Caco-2 (cell line): ENCODE measurements at regions of chr9 and their contacts with region 1.

Region 1: DNA sequence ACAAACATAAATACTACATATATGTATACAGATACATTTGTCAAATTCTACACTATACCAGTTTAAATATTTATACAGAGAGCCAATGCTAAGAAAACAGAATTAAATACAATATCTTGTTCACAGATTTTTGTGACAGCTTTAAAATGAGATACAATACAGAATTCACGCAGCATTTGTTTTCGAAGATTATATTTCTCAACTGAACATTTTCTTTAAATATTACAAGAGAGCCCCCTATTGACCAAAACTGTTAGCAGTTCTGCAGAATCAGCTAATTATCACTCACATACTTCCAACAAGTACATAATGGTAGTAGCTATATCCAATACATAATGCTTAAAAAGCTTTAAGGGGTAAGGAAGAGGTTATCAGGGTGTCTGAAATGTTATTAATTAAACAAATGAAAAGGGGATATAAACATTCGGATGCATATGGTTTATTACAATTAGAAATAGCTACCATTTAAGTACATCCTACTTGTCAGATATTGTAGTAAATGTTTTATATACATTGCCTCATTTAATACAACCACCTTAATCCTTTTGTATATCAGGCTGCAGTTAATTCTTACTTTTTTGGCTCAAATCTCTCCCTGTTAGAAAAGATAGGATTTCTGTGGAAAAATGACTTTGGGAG is 31.7 kb downstream of the ZDHHC21 start:
- DNase-seq: peak in 1 of 2 experiments; percentile 7
- H3K4me3 ChIP-seq: no peak overlapping the region
- H3K4me3 Mint-ChIP-seq: no peak overlapping the region
- H3K27ac Mint-ChIP-seq: no peak overlapping the region
- H3K4me1 ChIP-seq: no peaks in the 10 kb centered on the region
- H3K4me1 Mint-ChIP-seq: no peaks in the 10 kb centered on the region
- H3K27me3 ChIP-seq: no peaks in the 10 kb centered on the region
- H3K27me3 Mint-ChIP-seq: no peaks in the 10 kb centered on the region
- CTCF ChIP-seq: peak; percentile 26 to 30

Region 2: GRCh38 chr9:14441976-14442651 is 219.4 kb before region 1 on chr9:
- CTCF ChIA-PET with region 1: no interaction called
- POLR2A ChIA-PET with region 1: no interaction called
- intact Hi-C with region 1: loop called (anchors 5 kb)
- DNase-seq: peak; percentile 44 to 49
- H3K4me3 ChIP-seq: no peak overlapping the region
- H3K4me3 Mint-ChIP-seq: no peak overlapping the region
- H3K27ac Mint-ChIP-seq: no peak overlapping the region
- H3K4me1 ChIP-seq: no peaks in the 10 kb centered on the region
- H3K4me1 Mint-ChIP-seq: no peaks in the 10 kb centered on the region
- H3K27me3 ChIP-seq: no peaks in the 10 kb centered on the region
- H3K27me3 Mint-ChIP-seq: peaks cover 12% of the 10 kb centered on the region
- CTCF ChIP-seq: peak; percentile 36 to 39

Region 3: DNA sequence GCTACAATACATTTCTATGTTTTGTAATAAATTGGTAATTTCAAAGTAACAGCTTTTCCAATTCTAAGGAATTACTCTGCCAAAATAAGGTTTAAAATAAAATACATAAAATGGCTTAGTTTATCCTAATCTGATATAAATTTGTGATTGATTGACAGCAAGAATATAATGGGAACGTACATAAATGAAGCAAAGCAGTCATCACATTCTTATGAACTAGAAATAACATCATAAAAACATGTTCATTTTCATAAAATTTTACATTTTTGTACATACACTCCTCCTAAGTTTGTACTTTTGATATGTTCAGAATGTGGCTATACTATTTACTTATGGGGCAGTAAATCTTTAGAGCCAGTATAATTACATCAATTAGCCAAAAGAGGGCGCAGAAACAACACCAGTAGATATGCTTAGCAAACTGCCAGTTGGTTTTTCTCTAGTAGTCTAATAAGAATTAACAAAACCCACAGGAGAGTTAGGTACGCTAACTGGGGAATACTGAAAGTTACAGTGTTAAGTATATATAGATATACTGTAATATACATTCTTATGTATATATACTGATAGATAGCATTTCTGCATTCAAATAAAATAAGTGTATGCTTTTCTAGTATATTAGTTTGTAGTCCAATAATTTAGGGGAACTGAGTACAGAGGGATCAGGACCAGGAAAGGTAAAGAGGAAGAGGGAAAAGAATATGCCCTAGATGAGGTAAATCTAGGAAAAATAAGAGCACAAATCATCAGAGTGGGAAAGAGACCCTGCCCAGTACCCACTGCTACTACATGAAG is 45.2 kb before region 1 on chr9:
- CTCF ChIA-PET with region 1: no interaction called
- POLR2A ChIA-PET with region 1: no interaction called
- intact Hi-C with region 1: loop called (anchors 2 kb)
- DNase-seq: peak in 1 of 2 experiments; percentile 16
- H3K4me3 ChIP-seq: no peak overlapping the region
- H3K4me3 Mint-ChIP-seq: no peak overlapping the region
- H3K27ac Mint-ChIP-seq: no peak overlapping the region
- H3K4me1 ChIP-seq: no peaks in the 10 kb centered on the region
- H3K4me1 Mint-ChIP-seq: no peaks in the 10 kb centered on the region
- H3K27me3 ChIP-seq: no peaks in the 10 kb centered on the region
- H3K27me3 Mint-ChIP-seq: no peaks in the 10 kb centered on the region
- CTCF ChIP-seq: peak; percentile 42 to 45

Region 4: DNA sequence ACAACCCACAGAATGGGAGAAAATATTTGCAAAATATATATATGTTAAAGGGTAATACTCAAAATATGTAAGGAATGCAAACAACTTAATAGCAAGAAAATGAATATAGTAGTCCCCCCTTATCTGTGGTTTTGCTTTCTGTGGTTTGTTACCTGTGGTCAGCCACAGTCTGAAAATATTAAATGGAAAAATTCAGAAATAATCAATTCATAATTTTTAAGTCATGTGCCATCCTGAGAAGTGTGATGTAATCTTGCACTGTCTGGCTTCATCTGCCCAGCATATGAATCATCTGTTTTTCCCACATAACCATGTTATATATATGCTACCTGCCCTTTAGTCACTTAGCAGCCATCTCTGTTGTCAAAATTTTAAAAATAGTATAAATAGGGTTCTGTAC is 49.3 kb after region 1 on chr9:
- CTCF ChIA-PET with region 1: no interaction called
- POLR2A ChIA-PET with region 1: no interaction called
- intact Hi-C with region 1: no loop called
- DNase-seq: no peak
- H3K4me3 ChIP-seq: no peak overlapping the region
- H3K4me3 Mint-ChIP-seq: no peak overlapping the region
- H3K27ac Mint-ChIP-seq: no peak overlapping the region
- H3K4me1 ChIP-seq: no peaks in the 10 kb centered on the region
- H3K4me1 Mint-ChIP-seq: no peaks in the 10 kb centered on the region
- H3K27me3 ChIP-seq: no peaks in the 10 kb centered on the region
- H3K27me3 Mint-ChIP-seq: peaks cover 5% of the 10 kb centered on the region
- CTCF ChIP-seq: no peak